ENCODE measurements at regions of chr1 and their contacts with region 1.

Region 1: GRCh38 chr1:58893257-58893869 is 109.5 kb upstream of the JUN start:
- DNase-seq: no peak
- H3K4me3 ChIP-seq: no peak overlapping the region
- CTCF ChIP-seq: no peak

Region 2: DNA sequence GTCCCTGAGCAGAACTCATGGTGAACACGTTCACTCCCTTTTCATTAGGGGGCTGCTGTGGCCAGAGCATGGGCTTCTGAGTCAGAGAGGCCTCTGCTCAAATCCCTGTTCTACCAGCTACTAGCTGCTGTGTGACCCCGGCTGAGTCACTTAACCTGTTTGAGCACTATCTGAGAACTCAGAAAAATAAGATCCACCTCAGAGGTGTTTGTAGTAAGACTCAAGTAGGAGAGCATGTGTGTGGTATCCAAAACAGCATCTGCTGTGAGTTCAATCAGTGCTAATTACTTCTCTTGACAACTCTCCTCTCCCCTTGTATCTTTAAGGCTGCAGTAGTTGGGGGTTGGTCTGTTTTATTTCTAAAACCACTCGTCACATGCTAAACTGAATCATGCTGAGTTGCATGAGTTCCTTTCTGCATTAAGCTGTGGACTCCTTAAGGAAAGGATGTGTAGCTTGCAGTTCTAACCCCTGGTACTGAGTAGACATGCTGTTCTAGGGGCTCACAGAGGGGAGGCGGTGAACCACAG is 69.8 kb before region 1 on chr1:
- in situ Hi-C with region 1: no loop called
- DNase-seq: peak; percentile 49
- H3K4me3 ChIP-seq: no peak overlapping the region
- CTCF ChIP-seq: no peak

Region 3: DNA sequence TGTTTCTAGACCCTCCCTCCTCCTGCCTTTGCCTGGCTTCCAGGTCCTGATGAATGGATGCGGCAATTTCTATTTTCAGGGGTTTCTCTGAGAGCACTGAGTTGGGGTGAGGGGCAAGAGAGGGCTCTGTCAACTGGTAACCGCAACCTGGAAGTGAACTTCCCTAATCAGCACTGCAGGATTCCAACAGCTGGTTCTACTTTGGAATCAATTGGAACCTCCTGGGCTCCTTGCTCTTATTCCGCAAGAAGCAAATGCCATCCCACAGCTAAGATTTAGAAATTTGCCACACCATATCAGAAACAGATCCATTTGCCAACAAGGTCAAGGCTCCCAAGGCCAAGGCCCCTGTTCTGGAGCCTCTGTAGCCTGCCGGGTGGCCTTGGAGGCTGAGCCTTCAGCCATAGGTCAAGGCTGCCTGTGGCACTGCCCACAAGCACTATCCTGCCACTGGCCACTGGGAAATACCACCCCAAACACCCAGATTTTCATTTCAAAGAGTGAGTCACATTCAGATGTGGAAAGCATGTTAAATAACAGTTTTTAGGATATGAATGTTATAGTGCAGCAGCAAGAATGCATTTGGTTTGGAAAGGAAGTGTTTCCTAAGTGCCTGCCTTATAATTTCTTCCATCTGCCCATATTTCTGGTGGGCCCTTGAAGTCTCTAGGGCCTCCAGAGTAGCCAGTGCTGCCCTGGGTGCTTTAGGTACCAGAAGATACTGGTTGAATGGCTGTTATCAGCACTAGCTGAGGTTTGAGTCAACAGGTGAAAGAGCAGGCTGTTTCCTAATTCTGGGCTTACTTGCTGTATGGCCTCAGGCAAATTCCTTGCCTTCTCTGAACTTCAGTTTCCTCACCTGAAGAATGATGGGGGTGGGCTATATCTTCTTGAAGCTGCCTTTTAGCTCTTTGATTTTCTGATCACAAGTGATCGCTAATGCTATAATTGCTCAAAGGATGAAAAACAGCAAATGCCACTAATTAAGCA is 53.2 kb before region 1 on chr1:
- in situ Hi-C with region 1: loop called (anchors 5 kb)
- DNase-seq: no peak
- H3K4me3 ChIP-seq: no peak overlapping the region
- CTCF ChIP-seq: no peak